ENCODE measurements at regions of chr4 and their contacts with region 1.

Region 1: DNA sequence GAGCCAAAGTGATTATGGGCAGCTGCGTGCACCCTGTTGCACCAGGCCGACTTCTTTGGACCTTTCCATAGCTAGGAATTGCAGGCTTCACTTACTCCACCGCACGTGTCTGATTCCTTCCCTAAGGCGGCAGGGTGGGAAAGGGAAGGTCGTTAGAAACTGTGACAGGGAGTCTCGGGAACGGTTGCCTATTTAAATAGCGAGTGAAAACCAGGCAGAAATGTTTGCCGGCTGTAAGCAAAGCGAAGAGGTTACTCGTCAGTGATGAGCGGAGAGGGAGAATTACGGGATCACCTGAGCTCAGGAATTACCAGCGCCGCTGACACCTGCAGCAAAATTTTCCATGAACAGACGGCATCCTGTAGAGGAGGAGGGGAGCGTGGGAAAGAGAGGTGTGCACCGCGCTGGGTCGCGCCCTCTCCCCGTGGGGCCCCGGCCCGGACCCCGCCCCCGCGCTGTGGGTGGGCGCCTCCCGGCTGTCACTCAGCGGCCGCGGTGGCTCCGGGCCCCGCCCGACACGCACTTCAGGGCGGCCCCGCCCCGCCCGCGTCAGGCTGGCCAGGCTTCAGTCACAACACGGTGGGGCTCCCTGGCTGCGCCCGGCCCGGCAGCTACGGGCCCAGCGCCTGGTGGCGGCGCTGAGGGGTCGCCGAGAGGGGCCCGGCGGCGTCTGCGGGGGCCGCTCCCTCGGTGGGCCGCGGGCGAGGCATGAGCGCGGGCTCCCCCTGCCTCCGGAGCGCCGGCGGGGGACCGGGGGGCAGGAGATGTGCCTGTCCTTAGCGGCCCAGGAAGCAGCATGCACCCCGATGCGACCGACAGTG is at the start of gene SNX25:
- DNase-seq: peak; percentile 80
- H3K4me3 Mint-ChIP-seq: peak within 1 kb of the TSS; percentile 80
- H3K27ac Mint-ChIP-seq: peak within 1 kb of the TSS; percentile 79
- H3K4me1 Mint-ChIP-seq: peaks cover 12% of the 10 kb centered on the region
- H3K27me3 Mint-ChIP-seq: no peaks in the 10 kb centered on the region
- CTCF ChIP-seq: no peak
- total RNA-seq, gene SNX25: 10.5 and 14.4 TPM in 2 replicates

Region 2: DNA sequence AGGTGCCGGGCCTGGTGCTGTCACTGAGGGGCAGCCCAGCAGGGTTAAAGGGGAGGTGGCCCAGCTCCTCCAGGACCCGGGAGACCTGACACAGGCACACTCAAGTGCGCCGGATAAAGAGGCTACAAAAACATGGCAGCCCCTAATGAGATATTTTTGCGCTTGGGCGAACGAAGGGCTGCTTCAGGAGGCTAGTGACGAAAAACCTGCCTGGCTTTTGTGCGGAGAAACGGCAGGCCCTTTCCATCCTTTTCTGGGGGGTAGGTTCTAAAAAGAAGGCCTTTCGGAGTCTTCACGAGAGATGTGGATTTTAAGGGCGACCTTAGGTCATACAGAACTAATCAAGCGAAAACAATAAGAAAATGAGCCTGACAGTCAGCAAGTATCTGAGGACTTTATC is 155.5 kb before region 1 on chr4:
- CTCF ChIA-PET with region 1: no interaction called
- POLR2A ChIA-PET with region 1: no interaction called
- intact Hi-C with region 1: no loop called
- DNase-seq: no peak
- H3K4me3 Mint-ChIP-seq: no peak overlapping the region
- H3K27ac Mint-ChIP-seq: no peak overlapping the region
- H3K4me1 Mint-ChIP-seq: no peaks in the 10 kb centered on the region
- H3K27me3 Mint-ChIP-seq: peaks cover 11% of the 10 kb centered on the region
- CTCF ChIP-seq: no peak

Region 3: DNA sequence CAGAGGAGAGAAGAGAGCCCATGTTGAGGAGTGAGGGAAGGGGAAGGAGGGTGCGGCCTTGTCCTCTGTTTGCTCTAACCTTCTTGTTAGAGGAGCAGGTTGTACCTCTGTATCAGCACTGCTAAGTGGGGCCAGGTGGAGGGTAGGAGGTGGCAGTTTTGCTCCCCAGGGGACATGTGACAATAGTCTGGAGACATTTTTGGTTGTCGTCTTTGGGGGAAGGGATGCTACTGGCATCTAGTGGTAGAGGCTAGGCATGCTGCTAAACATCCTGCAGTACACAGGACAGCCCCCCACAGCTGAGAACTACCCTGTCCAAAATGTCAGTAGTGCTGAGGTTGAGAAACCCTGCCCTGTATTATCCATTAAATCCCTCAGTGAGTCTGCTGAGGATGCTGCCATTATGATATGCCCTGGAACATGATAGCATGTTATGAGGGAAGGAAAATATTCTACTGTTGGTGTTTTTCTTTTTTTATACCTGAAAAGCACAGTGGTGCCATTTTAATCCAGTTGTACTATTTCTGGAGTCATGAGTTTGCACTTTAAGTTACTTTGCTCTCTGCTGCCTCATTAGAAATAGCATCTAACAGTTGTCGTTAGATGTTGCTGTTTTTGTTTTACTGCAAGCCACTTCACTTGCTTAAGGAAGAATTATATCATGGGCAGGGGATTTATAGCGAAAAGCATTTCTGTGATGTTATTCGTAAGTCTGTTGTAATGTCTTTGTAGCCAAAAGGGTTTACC is 95.9 kb after region 1 on chr4:
- CTCF ChIA-PET with region 1: interaction called, 4 read pairs
- POLR2A ChIA-PET with region 1: interaction called, 12 read pairs
- intact Hi-C with region 1: loop called (anchors 1 kb)
- DNase-seq: peak; percentile 13
- H3K4me3 Mint-ChIP-seq: no peak overlapping the region
- H3K27ac Mint-ChIP-seq: peak overlapping the region; percentile 66
- H3K4me1 Mint-ChIP-seq: peaks cover 30% of the 10 kb centered on the region
- H3K27me3 Mint-ChIP-seq: no peaks in the 10 kb centered on the region
- CTCF ChIP-seq: peak; percentile 34

Measured in MCF 10A (cell line).